GM12878 (cell line): ENCODE measurements at regions of chr2 and their contacts with region 1.

Region 1: GRCh38 chr2:122543815-122544214 is 788.4 kb downstream of the TSN start:
- DNase-seq: no peak
- ATAC-seq: no peak
- H3K4me3 ChIP-seq: no peak overlapping the region
- H3K27ac ChIP-seq: no peak overlapping the region
- H3K4me1 ChIP-seq: no peaks in the 10 kb centered on the region
- H3K27me3 ChIP-seq: no peaks in the 10 kb centered on the region
- CTCF ChIP-seq: no peak
- EP300 ChIP-seq: no peak
- POLR2A ChIP-seq: no peak
- RAD21 ChIP-seq: no peak

Region 2: GRCh38 chr2:122565364-122565763 is 21.5 kb after region 1 on chr2:
- CTCF ChIA-PET with region 1: interaction called, 3 read pairs
- POLR2A ChIA-PET with region 1: interaction called, 5 read pairs
- RAD21 ChIA-PET with region 1: no interaction called
- SMC1A ChIA-PET with region 1: interaction called, 14 read pairs
- in situ Hi-C with region 1: no loop called
- intact Hi-C with region 1: no loop called
- DNase-seq: no peak
- ATAC-seq: no peak
- H3K4me3 ChIP-seq: no peak overlapping the region
- H3K27ac ChIP-seq: no peak overlapping the region
- H3K4me1 ChIP-seq: no peaks in the 10 kb centered on the region
- H3K27me3 ChIP-seq: no peaks in the 10 kb centered on the region
- CTCF ChIP-seq: no peak
- EP300 ChIP-seq: no peak
- POLR2A ChIP-seq: no peak
- RAD21 ChIP-seq: no peak

Region 3: DNA sequence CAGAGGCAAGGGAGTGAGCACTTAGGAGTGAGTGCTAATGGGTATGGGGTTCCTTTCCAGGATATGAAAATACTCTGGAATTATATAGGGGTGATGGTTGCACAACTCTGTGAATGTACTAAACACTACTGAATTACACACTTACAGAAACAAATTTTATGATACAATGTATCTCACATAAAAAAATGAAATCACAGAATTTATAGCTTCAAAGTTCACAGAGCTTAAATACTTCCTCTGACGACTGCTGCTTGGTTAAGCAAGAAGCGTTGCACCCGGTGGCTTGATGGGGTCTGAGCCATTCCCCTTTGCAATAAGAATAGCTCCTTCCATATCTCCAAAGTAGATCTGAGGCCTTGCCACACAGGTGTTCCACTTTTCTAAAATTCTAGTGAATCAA is 46.7 kb after region 1 on chr2:
- CTCF ChIA-PET with region 1: no interaction called
- POLR2A ChIA-PET with region 1: no interaction called
- RAD21 ChIA-PET with region 1: no interaction called
- SMC1A ChIA-PET with region 1: interaction called, 3 read pairs
- in situ Hi-C with region 1: no loop called
- intact Hi-C with region 1: loop called (anchors 5 kb)
- DNase-seq: no peak
- ATAC-seq: no peak
- H3K4me3 ChIP-seq: no peak overlapping the region
- H3K27ac ChIP-seq: no peak overlapping the region
- H3K4me1 ChIP-seq: no peaks in the 10 kb centered on the region
- H3K27me3 ChIP-seq: no peaks in the 10 kb centered on the region
- CTCF ChIP-seq: no peak
- EP300 ChIP-seq: no peak
- POLR2A ChIP-seq: no peak
- RAD21 ChIP-seq: no peak